A673 (cell line): ENCODE measurements at regions of chr2 and their contacts with region 1.

Region 1: DNA sequence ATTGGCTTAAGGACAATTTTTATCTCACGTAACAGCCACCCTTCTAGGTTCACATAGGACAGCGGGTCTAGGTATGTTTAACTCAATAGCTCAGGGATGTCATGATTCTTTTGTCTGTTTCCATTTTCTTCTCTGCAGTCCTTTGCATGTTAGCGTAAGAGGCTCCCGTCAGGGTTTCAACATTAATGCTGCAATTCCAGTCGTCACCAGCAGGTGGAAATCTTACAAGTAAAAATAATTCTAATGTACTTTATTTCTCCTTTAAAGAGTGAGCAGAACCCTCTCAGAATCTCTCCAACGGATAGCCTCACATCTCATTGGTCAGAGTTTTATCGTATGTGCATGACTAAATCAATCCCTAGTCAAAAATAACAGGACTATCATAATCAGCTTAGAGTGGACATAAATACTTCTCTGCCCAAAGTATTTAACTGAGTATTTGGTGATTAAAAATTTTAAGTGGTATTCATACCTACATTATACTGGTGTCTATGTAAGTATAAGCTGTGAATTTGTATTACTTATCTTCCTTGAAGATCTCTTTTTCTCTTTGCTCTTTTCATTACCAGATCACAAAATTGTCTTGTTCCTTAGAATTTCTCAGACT is 487.2 kb upstream of the GCFC2 start:
- DNase-seq: peak; percentile 87
- H3K4me3 ChIP-seq: no peak overlapping the region
- H3K27ac ChIP-seq: no peak overlapping the region
- H3K4me1 ChIP-seq: peaks cover 7% of the 10 kb centered on the region
- H3K27me3 ChIP-seq: no peaks in the 10 kb centered on the region
- CTCF ChIP-seq: peak; percentile 77

Region 2: DNA sequence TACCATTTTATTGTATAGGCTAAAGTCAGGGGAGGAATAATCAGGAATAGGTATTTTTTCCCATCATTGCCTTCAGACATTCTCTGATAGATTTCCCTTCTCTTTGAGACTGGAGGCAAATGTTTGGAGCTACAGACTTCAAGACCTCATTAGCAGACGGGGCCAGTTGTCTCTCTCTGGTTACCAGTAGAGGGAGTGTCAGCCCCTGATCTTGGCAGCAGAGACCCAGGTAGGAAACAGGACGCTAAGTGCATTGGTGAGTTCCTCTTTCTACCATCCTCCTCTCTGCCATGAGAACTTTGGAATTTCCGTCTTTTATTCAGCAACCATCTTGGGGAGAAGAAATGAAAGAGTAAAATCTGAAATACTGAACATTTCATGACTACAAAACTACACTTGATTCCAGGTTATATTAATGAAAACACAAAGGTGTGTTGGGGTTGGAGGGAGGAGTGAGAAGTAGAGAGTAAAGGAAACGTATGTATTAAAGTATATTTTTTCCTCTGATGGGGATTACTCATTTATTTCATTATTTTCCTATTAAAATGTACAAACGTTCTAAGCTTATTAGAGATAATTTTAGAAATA is 301.1 kb before region 1 on chr2:
- CTCF ChIA-PET with region 1: no interaction called
- POLR2A ChIA-PET with region 1: no interaction called
- intact Hi-C with region 1: loop called (anchors 5 kb)
- DNase-seq: peak; percentile 73
- H3K4me3 ChIP-seq: no peak overlapping the region
- H3K27ac ChIP-seq: no peak overlapping the region
- H3K4me1 ChIP-seq: no peaks in the 10 kb centered on the region
- H3K27me3 ChIP-seq: no peaks in the 10 kb centered on the region
- CTCF ChIP-seq: peak; percentile 78

Region 3: DNA sequence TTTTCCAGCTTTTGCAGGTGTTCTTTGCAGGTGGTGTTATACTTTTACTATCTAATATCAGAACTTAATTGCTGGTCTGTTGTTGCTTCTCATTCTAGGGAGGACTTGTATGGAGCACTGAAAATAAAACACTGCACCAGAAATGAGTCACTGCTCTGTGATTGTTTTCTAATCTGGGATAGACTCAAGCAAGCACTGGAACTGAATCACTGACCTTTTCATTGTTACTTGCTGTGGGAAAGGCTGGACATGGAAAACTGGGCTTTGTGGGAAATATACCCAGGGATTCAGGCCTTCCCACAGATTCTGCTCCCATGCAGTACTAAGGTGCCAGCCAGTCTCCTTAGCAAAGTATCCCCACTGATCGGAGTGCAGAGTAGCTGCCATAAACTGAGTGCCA is 17.3 kb before region 1 on chr2:
- CTCF ChIA-PET with region 1: no interaction called
- POLR2A ChIA-PET with region 1: no interaction called
- intact Hi-C with region 1: no loop called
- DNase-seq: no peak
- H3K4me3 ChIP-seq: no peak overlapping the region
- H3K27ac ChIP-seq: no peak overlapping the region
- H3K4me1 ChIP-seq: no peaks in the 10 kb centered on the region
- H3K27me3 ChIP-seq: no peaks in the 10 kb centered on the region
- CTCF ChIP-seq: no peak

Region 4: DNA sequence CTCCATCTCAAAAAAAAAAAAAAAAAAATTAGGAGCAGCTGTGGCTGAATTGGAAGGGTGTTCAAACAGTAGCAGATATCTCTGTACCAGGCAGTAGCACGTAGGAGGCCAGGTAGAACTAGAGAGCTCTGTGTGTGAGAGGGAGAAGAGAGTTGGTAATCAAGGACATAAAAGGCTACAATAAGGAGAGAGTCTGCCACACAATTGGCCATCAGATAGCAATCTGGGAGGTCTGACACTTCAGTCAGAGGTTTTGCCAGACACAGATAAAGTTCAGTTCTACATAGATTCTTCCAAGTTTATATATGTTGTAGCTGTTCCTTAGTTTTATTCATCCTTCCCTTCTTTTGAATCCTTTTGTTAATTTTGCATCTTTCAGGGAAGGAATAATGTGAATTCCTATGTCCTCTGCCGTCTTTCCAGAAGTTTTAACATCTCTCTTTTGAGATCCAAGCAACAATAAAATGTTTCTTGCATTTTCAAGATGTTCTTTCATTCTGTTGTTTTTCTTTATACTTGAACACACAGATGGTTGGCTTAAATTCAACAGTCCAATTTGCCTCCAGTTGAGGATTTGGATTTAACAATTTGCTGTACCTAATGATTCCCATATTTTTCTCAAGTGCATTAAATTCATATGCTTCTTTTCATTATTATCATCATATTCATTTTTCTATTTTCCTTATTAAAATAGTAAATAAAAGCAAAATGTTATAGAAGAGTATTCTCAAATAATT is 113.1 kb after region 1 on chr2:
- CTCF ChIA-PET with region 1: no interaction called
- POLR2A ChIA-PET with region 1: no interaction called
- intact Hi-C with region 1: no loop called
- DNase-seq: no peak
- H3K4me3 ChIP-seq: no peak overlapping the region
- H3K27ac ChIP-seq: no peak overlapping the region
- H3K4me1 ChIP-seq: peaks cover 18% of the 10 kb centered on the region
- H3K27me3 ChIP-seq: no peaks in the 10 kb centered on the region
- CTCF ChIP-seq: no peak